ENCODE measurements at regions of chr12 and their contacts with region 1.

Region 1: DNA sequence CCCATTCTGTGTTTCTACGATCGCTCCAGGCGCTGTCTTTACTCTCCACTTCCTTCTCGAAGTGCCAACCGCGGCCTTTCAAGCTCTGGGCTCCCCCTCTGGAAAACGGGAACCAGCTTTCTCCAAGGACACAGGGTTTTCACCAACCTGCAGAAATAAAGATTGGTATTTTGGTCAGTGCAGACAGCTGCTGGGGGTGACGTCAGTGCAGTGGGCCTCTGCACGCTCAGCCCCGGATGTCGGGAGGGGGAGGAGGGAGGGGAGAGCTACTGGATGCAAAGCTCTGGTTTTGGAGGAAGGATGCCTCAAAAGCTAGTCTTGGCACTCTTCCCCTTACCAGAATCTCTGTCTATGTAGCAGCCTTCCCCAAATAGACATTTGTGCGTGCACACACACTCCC is 19.9 kb downstream of the HRK start:
- DNase-seq: peak; percentile 92
- H3K4me3 ChIP-seq: peak overlapping the region; percentile 54
- H3K27ac ChIP-seq: peak overlapping the region; percentile 91
- H3K4me1 ChIP-seq: peaks cover 80% of the 10 kb centered on the region
- CTCF ChIP-seq: no peak

Region 2: DNA sequence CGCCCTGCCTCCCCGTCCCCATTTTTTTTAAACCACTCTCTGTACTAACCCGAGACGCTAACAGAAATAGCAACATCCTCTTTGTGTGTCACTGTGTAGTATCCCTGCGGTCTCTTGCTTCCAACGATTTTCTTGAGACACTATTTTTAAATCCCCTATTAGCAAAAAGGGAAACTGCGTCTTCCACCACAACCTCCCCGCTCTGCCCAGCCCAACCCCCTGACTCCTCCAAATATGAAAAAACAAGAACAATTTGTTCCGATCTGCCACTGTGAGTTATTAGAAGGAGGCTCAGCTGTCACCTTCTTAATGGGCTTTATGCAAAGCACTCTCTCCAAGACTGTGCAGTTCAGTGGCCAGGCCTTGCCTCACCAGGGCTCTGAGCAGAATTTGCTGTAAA is 225.8 kb before region 1 on chr12:
- CTCF ChIA-PET with region 1: no interaction called
- POLR2A ChIA-PET with region 1: no interaction called
- intact Hi-C with region 1: no loop called
- DNase-seq: no peak
- H3K4me3 ChIP-seq: no peak overlapping the region
- H3K27ac ChIP-seq: no peak overlapping the region
- H3K4me1 ChIP-seq: no peaks in the 10 kb centered on the region
- CTCF ChIP-seq: no peak

Region 3: GRCh38 chr12:116803013-116803736 is 58.1 kb before region 1 on chr12:
- CTCF ChIA-PET with region 1: interaction called, 3 read pairs
- POLR2A ChIA-PET with region 1: interaction called, 15 read pairs
- intact Hi-C with region 1: loop called (anchors 1 kb)
- DNase-seq: peak; percentile 98
- H3K4me3 ChIP-seq: peak overlapping the region; percentile 55
- H3K27ac ChIP-seq: peak overlapping the region; percentile 100
- H3K4me1 ChIP-seq: peaks cover 76% of the 10 kb centered on the region
- CTCF ChIP-seq: no peak

Region 4: GRCh38 chr12:117143008-117143532 is 281.8 kb after region 1 on chr12:
- CTCF ChIA-PET with region 1: no interaction called
- POLR2A ChIA-PET with region 1: no interaction called
- intact Hi-C with region 1: no loop called
- DNase-seq: no peak
- H3K4me3 ChIP-seq: no peak overlapping the region
- H3K27ac ChIP-seq: no peak overlapping the region
- H3K4me1 ChIP-seq: no peaks in the 10 kb centered on the region
- CTCF ChIP-seq: no peak

Region 5: GRCh38 chr12:117749431-117749830 is 888.1 kb after region 1 on chr12:
- CTCF ChIA-PET with region 1: no interaction called
- POLR2A ChIA-PET with region 1: no interaction called
- intact Hi-C with region 1: no loop called
- DNase-seq: no peak
- H3K4me3 ChIP-seq: no peak overlapping the region
- H3K27ac ChIP-seq: no peak overlapping the region
- H3K4me1 ChIP-seq: no peaks in the 10 kb centered on the region
- CTCF ChIP-seq: no peak